Sigmoid colon (tissue), 7 donors: ENCODE measurements at regions of chr2 and their contacts with region 1.

Region 1: DNA sequence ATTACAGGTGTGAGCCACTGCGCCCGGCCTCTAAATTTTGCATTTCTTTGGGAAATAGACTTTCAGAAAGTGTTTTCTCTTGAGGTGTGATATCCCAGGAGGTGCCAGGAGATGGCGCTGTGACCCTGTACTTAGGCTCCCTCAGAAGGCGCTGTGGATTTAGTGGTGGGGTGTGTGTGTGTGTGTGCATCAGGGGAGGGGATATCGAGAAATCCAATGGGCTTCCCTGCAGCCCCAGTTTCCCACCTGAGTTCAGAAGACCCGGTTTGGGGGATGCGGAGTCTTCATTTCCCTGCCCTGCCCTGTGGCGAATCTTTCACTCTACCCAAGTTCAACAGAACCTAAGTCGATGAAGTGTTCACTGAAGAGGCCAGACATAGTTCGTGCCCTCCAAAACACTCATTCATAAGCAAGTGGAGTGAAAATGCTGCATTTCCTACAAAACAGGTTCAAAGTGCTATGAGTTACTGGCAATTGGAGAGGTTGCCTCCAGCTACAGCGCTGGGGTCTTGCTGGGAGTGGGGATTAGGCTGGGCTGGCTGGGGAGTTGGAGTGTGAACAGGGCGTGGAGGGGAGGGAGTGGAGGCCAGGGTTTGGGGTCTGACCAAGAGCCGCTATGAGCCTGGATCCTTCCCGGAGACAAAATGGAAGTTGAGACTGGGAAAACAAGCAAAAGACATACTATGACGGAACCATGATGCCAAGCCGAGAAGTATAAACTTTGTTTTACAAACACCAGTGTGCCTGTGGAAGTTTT is 6.5 kb upstream of the WNT6 start:
- DNase-seq: no peak
- H3K4me3 ChIP-seq: no peak overlapping the region
- H3K27ac ChIP-seq: no peak overlapping the region
- H3K4me1 ChIP-seq: peaks cover 0 to 11% (median 3%) of the 10 kb centered on the region in 4 donors
- H3K27me3 ChIP-seq: peaks cover 8 to 98% (median 61%) of the 10 kb centered on the region in 3 donors
- CTCF ChIP-seq: peak; percentile 24 to 66 (median 61)
- EP300 ChIP-seq: no peak
- POLR2A ChIP-seq: no peak

Region 2: DNA sequence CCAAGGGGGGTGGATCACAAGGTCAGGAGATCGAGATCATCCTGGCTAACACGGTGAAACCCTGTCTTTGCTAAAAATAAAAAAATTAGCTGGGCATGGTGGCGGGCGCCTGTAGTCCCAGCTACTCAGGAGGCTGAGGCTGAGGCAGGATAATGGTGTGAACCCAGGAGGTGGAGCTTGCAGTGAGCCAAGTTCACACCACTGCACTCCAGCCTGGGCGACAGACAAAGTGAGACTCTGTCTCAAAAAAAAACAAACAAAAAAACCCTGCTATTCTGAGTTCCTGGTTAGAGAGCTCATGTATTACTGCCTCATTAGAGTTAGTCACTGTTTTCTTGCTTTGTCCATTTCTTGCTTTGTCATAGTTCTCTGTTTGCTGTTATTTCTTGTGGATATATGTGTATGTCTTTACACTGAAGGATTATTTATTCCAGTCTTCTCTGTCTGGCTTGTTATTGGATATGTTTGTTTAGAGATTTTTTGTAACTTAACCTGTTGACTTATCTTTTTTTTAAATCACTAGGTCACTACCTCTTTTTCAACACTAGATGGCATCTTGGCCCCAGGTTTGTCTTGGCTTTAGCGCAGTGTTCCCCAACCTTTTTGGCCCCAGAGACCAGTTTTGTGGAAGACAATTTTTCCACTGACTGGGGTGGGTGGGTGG is 125.5 kb before region 1 on chr2:
- intact Hi-C with region 1: loop called (anchors 5 kb)
- DNase-seq: no peak
- H3K4me3 ChIP-seq: no peak overlapping the region
- H3K27ac ChIP-seq: no peak overlapping the region
- H3K4me1 ChIP-seq: peaks cover 0 to 16% (median 5%) of the 10 kb centered on the region in 4 donors
- H3K27me3 ChIP-seq: no peaks in the 10 kb centered on the region
- CTCF ChIP-seq: peak in 2 of 4 experiments; percentile 20 to 28
- EP300 ChIP-seq: no peak
- POLR2A ChIP-seq: no peak